Natural killer cell (primary cell): ENCODE measurements at regions of chr17 and their contacts with region 1.

Region 1: GRCh38 chr17:72985881-72986720 is 106.4 kb downstream of the SLC39A11 start:
- DNase-seq: peak; percentile 21 to 73
- ATAC-seq: peak; percentile 64 to 85 (median 75)
- H3K4me3 ChIP-seq: no peak overlapping the region
- H3K4me3 Mint-ChIP-seq: no peak overlapping the region
- H3K27ac ChIP-seq: no peak overlapping the region
- H3K27ac Mint-ChIP-seq: no peak overlapping the region
- H3K4me1 ChIP-seq: peaks cover 5% of the 10 kb centered on the region
- H3K4me1 Mint-ChIP-seq: peaks cover 16 to 21% of the 10 kb centered on the region in 2 donors
- H3K27me3 ChIP-seq: no peaks in the 10 kb centered on the region
- H3K27me3 Mint-ChIP-seq: no peaks in the 10 kb centered on the region
- CTCF ChIP-seq: peak; percentile 69

Region 2: GRCh38 chr17:72725433-72726068 is 260.6 kb before region 1 on chr17:
- intact Hi-C with region 1: loop called (anchors 10 kb)
- DNase-seq: peak in 1 of 2 donors; percentile 71
- ATAC-seq: peak in 2 of 3 donors; percentile 49 to 67
- H3K4me3 ChIP-seq: no peak overlapping the region
- H3K4me3 Mint-ChIP-seq: peak overlapping the region; percentile 55
- H3K27ac ChIP-seq: no peak overlapping the region
- H3K27ac Mint-ChIP-seq: peak overlapping the region; percentile 6 to 46
- H3K4me1 ChIP-seq: peaks cover 19% of the 10 kb centered on the region
- H3K4me1 Mint-ChIP-seq: peaks cover 16 to 31% of the 10 kb centered on the region in 2 donors
- H3K27me3 ChIP-seq: no peaks in the 10 kb centered on the region
- H3K27me3 Mint-ChIP-seq: no peaks in the 10 kb centered on the region
- CTCF ChIP-seq: peak; percentile 69